Esophagus muscularis mucosa (tissue), 4 donors: ENCODE measurements at regions of chr22 and their contacts with region 1.

Region 1: GRCh38 chr22:17638432-17639246 is at the start of gene BCL2L13:
- DNase-seq: peak; percentile 98
- H3K4me3 ChIP-seq: peak within 1 kb of the TSS; percentile 81 to 88 (median 82)
- H3K27ac ChIP-seq: peak within 1 kb of the TSS; percentile 97 to 100 (median 98)
- H3K4me1 ChIP-seq: peaks cover 20 to 30% (median 24%) of the 10 kb centered on the region in 4 donors
- H3K27me3 ChIP-seq: no peaks in the 10 kb centered on the region
- CTCF ChIP-seq: peak in 2 of 3 experiments; percentile 12 to 16
- EP300 ChIP-seq: no peak
- POLR2A ChIP-seq: peak; percentile 84
- total RNA-seq, gene BCL2L13: 102 to 199 (median 133) TPM

Region 2: DNA sequence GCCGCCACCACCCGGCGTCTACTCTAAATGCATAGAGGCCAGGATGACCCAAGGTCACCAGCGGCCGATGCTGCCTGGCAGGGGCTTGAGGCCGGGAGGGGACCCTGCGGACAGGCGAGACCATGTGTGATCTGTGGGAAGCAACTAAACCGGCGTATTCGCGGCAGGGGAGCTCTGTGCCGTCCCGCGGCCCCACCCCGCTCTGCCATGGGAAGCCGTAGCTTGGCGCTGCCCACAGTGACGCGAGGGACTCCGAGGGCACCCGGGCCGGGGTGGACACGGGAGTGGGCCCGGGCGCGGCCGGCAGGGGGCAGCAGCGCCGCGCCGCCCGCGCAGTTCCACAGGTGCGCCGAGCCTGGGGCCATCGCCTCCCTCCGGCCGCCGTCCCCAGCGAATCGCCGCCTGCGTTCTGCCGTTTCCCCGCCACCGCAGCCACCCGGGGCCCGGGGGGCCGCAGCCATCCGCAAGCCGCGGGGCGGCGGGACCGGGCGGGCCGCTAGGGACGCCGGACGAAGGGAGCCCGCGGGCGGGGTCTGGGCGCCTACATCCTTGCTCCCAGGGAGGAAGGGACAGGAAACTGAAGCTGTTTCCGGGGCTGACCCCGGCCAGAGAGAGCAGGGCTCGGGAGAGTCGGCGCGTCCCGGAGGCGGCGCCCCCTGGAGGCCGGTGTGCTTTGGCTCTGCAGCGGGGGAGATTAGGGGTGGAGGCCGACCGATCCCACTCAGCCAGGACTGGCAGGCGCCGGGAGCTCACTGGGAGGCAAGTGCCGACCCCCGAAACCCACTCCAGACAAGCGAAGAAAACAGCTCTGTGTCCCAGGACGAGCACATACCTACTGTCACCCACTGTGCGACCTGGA is 467.1 kb before region 1 on chr22:
- intact Hi-C with region 1: loop called (anchors 10 kb)
- DNase-seq: peak; percentile 95
- H3K4me3 ChIP-seq: peak overlapping the region; percentile 73 to 85 (median 80)
- H3K27ac ChIP-seq: peak overlapping the region; percentile 92 to 97 (median 96)
- H3K4me1 ChIP-seq: peaks cover 10 to 28% (median 23%) of the 10 kb centered on the region in 4 donors
- H3K27me3 ChIP-seq: no peaks in the 10 kb centered on the region
- CTCF ChIP-seq: peak; percentile 62 to 88 (median 71)
- EP300 ChIP-seq: no peak
- POLR2A ChIP-seq: no peak

Region 3: DNA sequence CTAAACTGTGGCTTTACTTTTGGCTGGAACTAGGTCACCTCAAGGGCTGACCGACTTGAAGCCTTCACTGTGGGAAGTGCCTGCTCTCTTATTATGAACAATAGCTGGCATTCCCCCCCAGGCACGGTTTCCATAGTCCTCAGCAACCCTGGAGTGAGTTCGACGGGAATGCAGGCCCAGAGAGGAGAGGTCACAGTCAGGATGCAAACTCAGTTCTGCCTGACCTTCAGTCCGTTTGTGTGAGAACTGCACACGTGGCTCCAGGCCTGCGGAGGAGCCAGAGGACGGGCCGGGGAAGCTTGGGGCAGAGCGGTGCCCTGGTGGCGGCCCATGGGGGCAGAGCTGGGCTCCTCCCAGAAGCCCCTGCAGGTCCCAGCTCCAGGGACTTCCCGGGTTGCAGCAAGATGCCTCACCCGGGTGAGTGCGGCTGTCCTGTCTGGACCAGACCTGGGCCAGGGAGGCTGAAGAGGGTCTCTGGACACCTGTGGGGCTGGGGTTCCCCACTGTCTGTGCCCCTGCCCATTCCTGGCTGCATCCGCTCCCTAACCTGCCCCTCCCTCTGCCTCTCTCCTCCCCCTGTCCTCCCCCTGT is 58.1 kb before region 1 on chr22:
- intact Hi-C with region 1: no loop called
- DNase-seq: no peak
- H3K4me3 ChIP-seq: no peak overlapping the region
- H3K27ac ChIP-seq: no peak overlapping the region
- H3K4me1 ChIP-seq: peaks cover 0 to 14% (median 10%) of the 10 kb centered on the region in 4 donors
- H3K27me3 ChIP-seq: peaks cover 0 to 9% (median 0%) of the 10 kb centered on the region in 4 donors
- CTCF ChIP-seq: no peak
- EP300 ChIP-seq: no peak
- POLR2A ChIP-seq: no peak

Region 4: DNA sequence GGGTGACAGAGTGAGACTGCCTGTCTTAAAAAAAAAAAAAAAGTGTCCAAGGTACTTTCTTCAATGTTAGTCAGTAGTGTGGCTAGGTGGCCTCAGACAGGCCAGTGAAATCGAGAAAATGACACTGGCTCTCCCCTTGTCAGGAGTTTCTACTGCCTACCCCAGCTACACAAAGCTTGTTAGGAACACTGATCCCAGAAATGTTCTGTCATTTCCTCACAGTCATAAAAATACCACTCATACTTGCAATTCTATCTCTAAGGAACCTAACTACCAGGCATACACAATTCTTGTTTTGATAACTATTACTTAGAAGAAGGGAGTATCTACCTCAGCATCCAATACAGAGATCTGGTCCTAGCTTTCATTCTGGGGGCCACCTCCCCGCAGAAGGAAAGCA is 41.4 kb before region 1 on chr22:
- intact Hi-C with region 1: no loop called
- DNase-seq: no peak
- H3K4me3 ChIP-seq: no peak overlapping the region
- H3K27ac ChIP-seq: peak overlapping the region in 3 of 4 donors; percentile 38 to 68 (median 42)
- H3K4me1 ChIP-seq: peaks cover 0 to 19% (median 11%) of the 10 kb centered on the region in 4 donors
- H3K27me3 ChIP-seq: no peaks in the 10 kb centered on the region
- CTCF ChIP-seq: no peak
- EP300 ChIP-seq: no peak
- POLR2A ChIP-seq: no peak

Region 5: DNA sequence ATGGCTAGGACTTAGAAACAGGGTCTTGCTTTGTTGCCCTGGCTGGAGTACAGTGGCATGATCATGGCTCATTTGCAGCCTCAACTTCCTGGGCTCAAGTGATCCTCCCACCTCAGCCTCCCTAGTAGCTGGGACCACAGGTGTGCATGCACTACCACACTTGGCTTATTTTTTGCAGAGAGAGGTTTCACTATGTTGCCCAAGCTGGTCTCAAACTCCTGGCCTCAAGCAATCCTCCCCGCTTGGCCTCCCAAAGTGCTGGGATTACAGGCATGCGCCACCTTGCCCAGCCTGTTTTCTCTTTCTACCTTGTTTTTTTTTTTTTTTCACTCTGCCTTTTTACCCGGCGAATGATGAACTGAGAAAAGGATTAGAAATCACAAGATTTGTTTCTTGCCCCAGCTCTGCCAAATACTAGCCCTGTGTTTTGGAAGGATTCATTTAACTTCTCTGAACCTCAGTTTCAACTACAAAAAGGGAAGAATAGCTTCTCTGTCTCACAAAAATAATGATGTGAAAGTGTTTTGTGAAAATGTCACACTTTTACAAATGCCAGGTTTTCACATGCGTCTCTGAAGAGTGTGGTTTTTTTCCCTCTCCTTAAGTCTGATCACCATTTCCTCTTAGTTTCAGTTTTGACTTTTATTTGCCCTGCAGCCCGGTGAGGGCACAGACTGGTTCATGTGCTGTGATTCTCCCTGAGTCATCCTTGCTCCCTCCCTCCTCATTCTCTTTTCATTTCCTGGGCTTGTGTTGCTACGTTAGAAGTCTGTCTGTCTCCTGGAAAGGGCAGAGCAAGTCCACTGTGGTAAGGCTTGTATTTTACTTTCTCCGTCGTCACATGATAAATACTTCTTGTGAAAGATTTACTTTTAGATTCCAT is 67.6 kb after region 1 on chr22:
- intact Hi-C with region 1: loop called (anchors 5 kb)
- DNase-seq: no peak
- H3K4me3 ChIP-seq: peak overlapping the region; percentile 36 to 56 (median 49)
- H3K27ac ChIP-seq: peak overlapping the region; percentile 75 to 82 (median 78)
- H3K4me1 ChIP-seq: peaks cover 0 to 47% (median 25%) of the 10 kb centered on the region in 4 donors
- H3K27me3 ChIP-seq: no peaks in the 10 kb centered on the region
- CTCF ChIP-seq: no peak
- EP300 ChIP-seq: no peak
- POLR2A ChIP-seq: peak; percentile 30